ENCODE measurements at regions of chr12 and their contacts with region 1.

Region 1: GRCh38 chr12:6461401-6462233 is 8.9 kb downstream of the VAMP1 start:
- DNase-seq: peak; percentile 59 to 93 (median 83)
- ATAC-seq: peak; percentile 79 to 93
- H3K4me3 Mint-ChIP-seq: peak overlapping the region; percentile 67 to 89 (median 81)
- H3K27ac Mint-ChIP-seq: peak overlapping the region; percentile 94 to 100 (median 98)
- H3K4me1 Mint-ChIP-seq: peaks cover 63 to 94% (median 91%) of the 10 kb centered on the region in 4 donors
- H3K27me3 Mint-ChIP-seq: no peaks in the 10 kb centered on the region

Region 2: GRCh38 chr12:6341417-6342139 is 120.0 kb before region 1 on chr12 and contains the start of gene TNFRSF1A:
- POLR2A ChIA-PET with region 1: interaction called, 76 read pairs
- DNase-seq: peak in 5 of 10 donors; percentile 30 to 62 (median 52)
- ATAC-seq: peak; percentile 39 to 49
- H3K4me3 Mint-ChIP-seq: no peak within 1 kb of the TSS
- H3K27ac Mint-ChIP-seq: peak within 1 kb of the TSS in 1 of 10 donors; percentile 95
- H3K4me1 Mint-ChIP-seq: peaks cover 29 to 47% (median 45%) of the 10 kb centered on the region in 4 donors
- H3K27me3 Mint-ChIP-seq: peaks cover 0 to 3% (median 0%) of the 10 kb centered on the region in 5 donors
- polyA plus RNA-seq, gene TNFRSF1A: 19.5 to 43.7 (median 31.1) TPM

Measured in naive thymus-derived CD8-positive, alpha-beta T cell (primary cell).